PC-9 (cell line): ENCODE measurements at regions of chr6 and their contacts with region 1.

Region 1: GRCh38 chr6:78476561-78476960 is 390.8 kb upstream of the IRAK1BP1 start:
- DNase-seq: no peak
- H3K4me3 ChIP-seq: no peak overlapping the region
- H3K27ac ChIP-seq: no peak overlapping the region
- H3K4me1 ChIP-seq: no peaks in the 10 kb centered on the region
- H3K27me3 ChIP-seq: no peaks in the 10 kb centered on the region
- CTCF ChIP-seq: no peak

Region 2: DNA sequence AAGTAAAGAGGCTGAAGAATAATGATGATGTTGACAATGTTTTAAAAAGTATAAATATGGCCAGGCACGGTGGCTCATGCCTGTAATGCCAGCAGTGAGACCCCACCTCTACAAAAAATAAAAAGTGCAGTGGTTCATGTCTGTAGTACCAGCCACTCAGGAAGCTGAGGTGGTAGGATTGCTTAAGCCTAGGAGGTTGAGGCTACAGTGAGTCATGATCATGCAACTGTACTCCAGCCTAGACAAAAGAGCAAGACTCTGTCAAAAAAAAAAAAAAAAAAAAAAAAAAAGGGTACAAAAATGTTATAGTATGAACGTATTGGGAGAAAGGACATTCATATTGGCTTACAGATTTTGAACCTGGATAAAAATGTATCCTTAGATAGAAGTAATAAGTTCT is 152.3 kb before region 1 on chr6:
- CTCF ChIA-PET with region 1: no interaction called
- POLR2A ChIA-PET with region 1: no interaction called
- intact Hi-C with region 1: no loop called
- DNase-seq: no peak
- H3K4me3 ChIP-seq: no peak overlapping the region
- H3K27ac ChIP-seq: no peak overlapping the region
- H3K4me1 ChIP-seq: no peaks in the 10 kb centered on the region
- H3K27me3 ChIP-seq: no peaks in the 10 kb centered on the region
- CTCF ChIP-seq: no peak

Region 3: GRCh38 chr6:78436335-78436734 is 40.2 kb before region 1 on chr6:
- CTCF ChIA-PET with region 1: no interaction called
- POLR2A ChIA-PET with region 1: interaction called, 35 read pairs
- intact Hi-C with region 1: no loop called
- DNase-seq: no peak
- H3K4me3 ChIP-seq: no peak overlapping the region
- H3K27ac ChIP-seq: no peak overlapping the region
- H3K4me1 ChIP-seq: no peaks in the 10 kb centered on the region
- H3K27me3 ChIP-seq: no peaks in the 10 kb centered on the region
- CTCF ChIP-seq: peak; percentile 44